Activated CD8-positive, alpha-beta memory T cell treated with anti-CD3 and anti-CD28 coated beads, Interleukin-2, amount 10 ng/mL, durations not matched to agents 7 days and 5 days (primary cell): ENCODE measurements at regions of chr17 and their contacts with region 1.

Region 1: DNA sequence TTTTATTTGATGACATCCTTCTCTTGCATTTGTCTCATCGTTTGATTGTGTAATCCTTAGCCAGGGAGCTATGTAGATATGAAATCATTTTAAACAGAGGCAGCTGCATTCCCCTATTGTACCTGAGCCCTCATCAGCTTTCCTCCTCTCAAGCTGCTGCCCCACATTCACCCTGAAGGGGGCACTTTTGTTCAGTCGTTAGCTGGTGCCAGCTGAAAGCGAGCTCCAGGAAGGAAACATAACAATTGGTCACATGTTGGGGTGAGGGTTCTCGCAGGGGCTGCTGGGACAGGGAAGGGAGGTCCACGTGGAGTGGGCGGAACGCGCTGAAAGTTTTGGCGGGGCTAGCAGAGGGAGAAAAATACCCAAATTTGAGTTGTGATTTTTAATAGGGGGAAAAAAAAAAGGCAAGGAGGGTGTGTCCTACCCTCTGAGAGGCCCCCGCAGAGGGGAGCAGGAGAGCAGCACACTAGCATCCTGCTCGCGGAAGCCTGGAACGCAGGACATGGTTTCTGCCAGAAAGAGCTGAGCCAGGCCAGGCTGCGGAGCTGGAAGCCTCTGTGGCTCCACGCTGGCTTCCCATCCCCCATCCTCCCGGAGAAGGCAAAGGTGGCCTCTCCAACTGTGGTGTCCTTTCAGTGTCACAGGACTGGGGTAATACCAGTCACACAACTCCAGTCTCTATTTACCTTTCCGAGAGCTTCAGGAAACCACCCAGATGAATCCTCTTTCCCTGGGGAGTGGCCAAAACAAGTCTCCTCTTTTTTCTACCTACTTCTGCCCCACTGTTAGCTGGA is 8.5 kb upstream of the MSL1 start:
- DNase-seq: peak; percentile 97
- ATAC-seq: peak; percentile 91
- H3K4me3 Mint-ChIP-seq: peak overlapping the region; percentile 81
- H3K27ac Mint-ChIP-seq: peak overlapping the region; percentile 81
- H3K4me1 Mint-ChIP-seq: peaks cover 44% of the 10 kb centered on the region
- H3K27me3 Mint-ChIP-seq: no peaks in the 10 kb centered on the region

Region 2: DNA sequence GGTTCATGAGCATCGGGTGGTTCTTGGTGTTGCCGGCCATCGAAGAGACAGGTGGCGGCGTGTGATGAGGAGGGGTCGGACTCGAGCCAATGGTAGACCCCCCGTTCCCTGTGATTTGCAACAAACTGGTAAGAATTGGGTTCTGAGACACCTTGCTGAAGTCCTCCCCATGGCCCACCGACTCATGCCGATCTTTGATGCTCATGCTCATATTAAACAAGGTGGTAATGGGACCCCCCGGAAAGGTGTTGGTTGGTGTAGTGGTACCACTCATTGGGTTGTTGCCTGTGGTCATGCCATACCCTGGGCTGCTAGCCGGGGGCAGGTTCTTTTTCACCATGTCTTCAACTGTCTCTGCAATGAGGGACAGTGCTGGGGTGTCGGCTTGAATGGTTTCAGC is 703.0 kb before region 1 on chr17:
- CTCF ChIA-PET with region 1: no interaction called
- DNase-seq: no peak
- ATAC-seq: no peak
- H3K4me3 Mint-ChIP-seq: no peak overlapping the region
- H3K27ac Mint-ChIP-seq: no peak overlapping the region
- H3K4me1 Mint-ChIP-seq: peaks cover 20% of the 10 kb centered on the region
- H3K27me3 Mint-ChIP-seq: no peaks in the 10 kb centered on the region

Region 3: GRCh38 chr17:39872751-39873150 is 240.6 kb before region 1 on chr17:
- CTCF ChIA-PET with region 1: no interaction called
- DNase-seq: no peak
- ATAC-seq: no peak
- H3K4me3 Mint-ChIP-seq: no peak overlapping the region
- H3K27ac Mint-ChIP-seq: no peak overlapping the region
- H3K4me1 Mint-ChIP-seq: peaks cover 13% of the 10 kb centered on the region
- H3K27me3 Mint-ChIP-seq: peaks cover 4% of the 10 kb centered on the region

Region 4: DNA sequence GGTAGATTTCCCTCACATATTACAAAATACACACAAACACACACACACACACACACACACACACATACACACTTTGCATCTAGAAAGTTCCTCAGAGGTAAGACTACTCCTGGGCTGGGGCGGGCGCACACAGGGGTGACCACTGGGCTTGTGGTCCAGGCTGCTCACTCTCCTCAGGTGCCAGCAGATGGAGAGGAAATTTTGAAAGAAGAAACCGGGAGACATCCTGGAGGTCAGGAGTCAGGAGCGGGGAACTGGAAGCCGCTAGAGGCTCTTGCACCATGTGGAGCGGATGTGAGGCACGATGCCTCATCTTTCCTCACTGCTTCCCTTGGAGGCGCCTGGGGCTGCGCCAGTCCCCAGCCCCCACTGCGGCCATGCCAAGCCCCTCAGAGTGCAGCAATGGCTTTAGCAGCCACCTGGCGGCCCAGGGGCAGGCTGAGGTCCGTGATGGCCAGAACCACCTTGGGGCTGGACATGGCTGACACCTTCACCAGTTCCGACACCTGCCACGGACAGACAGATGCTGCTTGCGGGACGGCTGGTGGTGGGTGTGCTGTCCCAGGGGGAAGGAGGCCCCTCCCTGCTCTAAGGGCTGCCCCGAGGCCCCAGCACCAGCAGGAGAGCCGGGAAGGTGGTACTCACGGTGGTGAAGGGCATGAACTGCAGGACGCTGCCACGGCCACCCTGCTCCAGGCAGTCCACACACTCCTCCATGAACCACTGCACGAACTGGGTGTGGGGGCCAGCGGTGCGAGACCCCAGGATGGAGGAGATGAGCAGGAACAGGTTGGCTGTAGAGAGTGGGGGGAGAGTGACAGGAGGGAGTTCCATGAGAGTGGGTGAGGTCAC is 93.9 kb before region 1 on chr17:
- CTCF ChIA-PET with region 1: interaction called, 65 read pairs
- DNase-seq: no peak
- ATAC-seq: no peak
- H3K4me3 Mint-ChIP-seq: no peak overlapping the region
- H3K27ac Mint-ChIP-seq: no peak overlapping the region
- H3K4me1 Mint-ChIP-seq: no peaks in the 10 kb centered on the region
- H3K27me3 Mint-ChIP-seq: no peaks in the 10 kb centered on the region

Region 5: DNA sequence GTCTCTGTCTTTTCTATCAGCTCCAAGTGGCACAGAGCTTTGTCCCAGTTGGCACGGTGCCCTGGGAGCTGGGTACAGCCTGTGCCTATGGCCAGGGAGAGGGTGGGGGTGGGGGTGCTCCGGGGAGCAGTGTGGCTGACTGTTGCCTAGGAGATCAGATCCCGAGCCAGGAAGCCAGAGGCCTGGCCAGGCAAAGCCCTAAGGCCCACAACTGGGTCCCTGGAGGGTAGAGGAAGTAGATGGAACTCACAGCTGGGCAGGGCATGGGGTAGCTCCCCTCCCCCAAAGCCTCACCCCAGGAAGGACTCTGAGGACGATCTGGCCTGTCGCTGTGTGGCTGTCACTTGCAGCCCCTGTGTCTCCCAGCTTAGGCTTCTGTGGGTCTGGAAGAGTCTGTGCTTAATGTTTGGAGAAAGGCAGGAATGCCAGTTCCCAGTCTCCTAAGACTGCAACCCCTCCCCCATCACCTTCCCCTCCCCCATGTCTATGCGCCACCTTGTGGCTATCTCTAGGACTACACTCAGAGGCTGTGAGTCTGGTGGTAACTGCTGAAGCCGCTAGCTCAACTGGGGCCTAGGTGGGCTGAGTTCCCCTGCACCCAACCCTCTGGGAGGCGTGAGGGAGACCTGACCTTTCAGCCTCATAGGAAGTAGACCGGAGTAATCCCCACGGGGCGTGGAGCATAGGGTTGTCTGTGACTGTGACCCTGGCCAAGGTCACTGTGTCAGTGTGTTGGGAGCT is 37.9 kb before region 1 on chr17:
- CTCF ChIA-PET with region 1: interaction called, 40 read pairs
- DNase-seq: peak; percentile 72
- ATAC-seq: peak; percentile 81
- H3K4me3 Mint-ChIP-seq: no peak overlapping the region
- H3K27ac Mint-ChIP-seq: peak overlapping the region; percentile 62
- H3K4me1 Mint-ChIP-seq: peaks cover 11% of the 10 kb centered on the region
- H3K27me3 Mint-ChIP-seq: no peaks in the 10 kb centered on the region

Region 6: GRCh38 chr17:40134184-40134583 is 20.9 kb after region 1 on chr17:
- CTCF ChIA-PET with region 1: interaction called, 32 read pairs
- DNase-seq: no peak
- ATAC-seq: no peak
- H3K4me3 Mint-ChIP-seq: no peak overlapping the region
- H3K27ac Mint-ChIP-seq: no peak overlapping the region
- H3K4me1 Mint-ChIP-seq: peaks cover 7% of the 10 kb centered on the region
- H3K27me3 Mint-ChIP-seq: no peaks in the 10 kb centered on the region

Region 7: DNA sequence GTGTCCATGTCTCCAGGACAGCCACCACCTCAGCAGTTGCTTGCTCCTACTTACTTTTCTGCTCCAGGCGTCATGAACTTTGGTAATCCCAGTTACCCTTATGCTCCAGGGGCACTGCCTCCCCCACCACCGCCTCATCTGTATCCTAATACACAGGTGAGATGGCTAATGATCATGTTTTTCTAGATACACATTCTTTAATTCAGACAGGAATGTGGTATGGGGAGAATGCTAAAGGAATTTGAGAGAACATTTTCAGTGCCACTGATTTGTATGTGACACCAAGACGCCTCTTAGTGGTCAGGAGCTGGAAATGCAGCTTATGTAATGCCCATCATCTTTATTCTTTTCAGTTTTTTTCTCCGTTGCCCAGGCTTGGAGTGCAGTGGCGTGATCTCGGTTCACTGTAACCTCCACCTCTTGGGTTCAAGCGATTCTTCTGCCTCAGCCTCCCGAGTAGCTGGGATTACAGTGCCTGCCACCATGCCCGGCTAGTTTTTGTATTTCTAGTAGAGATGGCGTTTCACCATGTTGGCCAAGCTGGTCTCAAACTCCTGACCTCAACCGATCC is 55.0 kb after region 1 on chr17:
- CTCF ChIA-PET with region 1: interaction called, 120 read pairs
- DNase-seq: peak; percentile 56
- ATAC-seq: peak; percentile 58
- H3K4me3 Mint-ChIP-seq: no peak overlapping the region
- H3K27ac Mint-ChIP-seq: peak overlapping the region; percentile 53
- H3K4me1 Mint-ChIP-seq: peaks cover 3% of the 10 kb centered on the region
- H3K27me3 Mint-ChIP-seq: no peaks in the 10 kb centered on the region

Region 8: DNA sequence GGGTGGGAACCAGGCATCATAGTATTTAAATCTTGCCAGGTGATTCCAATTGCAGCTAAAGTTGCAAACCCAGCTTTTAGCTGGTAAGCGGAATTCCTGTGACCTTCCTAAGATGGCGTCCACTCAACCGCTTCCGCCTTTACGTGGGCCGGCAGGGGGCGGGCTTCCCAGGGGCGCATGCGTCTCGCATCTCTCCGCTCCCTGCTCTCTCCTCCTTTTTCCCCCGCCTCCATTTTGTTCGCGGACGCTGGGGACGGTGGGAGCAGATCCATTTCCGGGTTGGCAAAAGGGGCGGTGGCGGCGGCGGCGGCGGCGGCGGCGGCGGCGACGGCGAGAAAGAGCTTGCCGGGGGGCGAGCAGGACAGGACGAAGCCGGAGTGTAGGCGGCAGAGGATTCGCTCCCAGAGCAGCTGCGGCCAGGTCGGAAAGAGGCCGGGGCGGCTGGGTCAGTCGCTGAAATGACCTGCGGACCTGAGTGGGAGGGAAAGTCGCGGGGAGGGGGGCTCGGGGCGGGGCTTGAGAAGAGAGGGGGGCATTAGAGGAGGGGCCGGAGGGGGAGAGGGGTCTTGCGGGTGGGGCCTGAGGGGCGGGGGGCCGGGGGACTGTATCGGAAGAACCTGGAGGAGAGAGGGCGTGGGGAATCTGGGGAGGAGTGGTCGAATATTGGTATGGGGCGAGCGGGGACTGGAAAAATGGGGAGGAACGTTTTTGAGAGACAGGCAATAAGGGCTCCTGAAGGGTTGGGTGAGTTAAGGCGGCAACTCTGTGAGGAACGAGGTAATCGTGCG is 106.0 kb after region 1 on chr17 and contains the start of gene WIPF2:
- CTCF ChIA-PET with region 1: interaction called, 13 read pairs
- DNase-seq: peak; percentile 98
- ATAC-seq: peak; percentile 96
- H3K4me3 Mint-ChIP-seq: peak within 1 kb of the TSS; percentile 92
- H3K27ac Mint-ChIP-seq: peak within 1 kb of the TSS; percentile 100
- H3K4me1 Mint-ChIP-seq: peaks cover 26% of the 10 kb centered on the region
- H3K27me3 Mint-ChIP-seq: no peaks in the 10 kb centered on the region
- total RNA-seq, gene WIPF2: 24.1 to 26.1 TPM